Cardiac septum (tissue), 1 donor: ENCODE measurements at regions of chr17 and their contacts with region 1.

Region 1: GRCh38 chr17:40559954-40560591 is 5.2 kb downstream of the CCR7 start:
- DNase-seq: peak; percentile 93

Region 2: DNA sequence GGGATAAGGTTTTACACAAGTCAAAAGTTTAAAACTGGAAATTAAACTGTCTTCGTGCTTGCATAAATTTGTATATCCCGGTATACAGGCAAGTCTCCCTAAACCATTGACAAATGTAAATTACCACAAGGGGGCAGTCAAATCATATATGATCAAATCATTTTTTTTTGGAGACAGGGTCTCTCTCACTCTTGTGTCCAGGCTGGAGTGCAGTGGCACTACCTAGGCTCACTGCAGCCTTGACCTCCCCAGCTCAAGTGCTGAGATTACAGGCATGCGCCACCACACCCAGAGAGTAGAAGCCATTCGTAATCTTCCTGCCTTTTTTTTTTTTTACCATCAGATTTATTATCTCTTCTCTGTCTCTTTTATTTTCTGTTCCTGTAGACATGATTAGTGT is 160.9 kb before region 1 on chr17:
- intact Hi-C with region 1: loop called (anchors 5 kb)
- DNase-seq: no peak

Region 3: GRCh38 chr17:40443583-40444327 is 116.3 kb before region 1 on chr17:
- intact Hi-C with region 1: loop called (anchors 2 kb)
- DNase-seq: peak; percentile 85

Region 4: DNA sequence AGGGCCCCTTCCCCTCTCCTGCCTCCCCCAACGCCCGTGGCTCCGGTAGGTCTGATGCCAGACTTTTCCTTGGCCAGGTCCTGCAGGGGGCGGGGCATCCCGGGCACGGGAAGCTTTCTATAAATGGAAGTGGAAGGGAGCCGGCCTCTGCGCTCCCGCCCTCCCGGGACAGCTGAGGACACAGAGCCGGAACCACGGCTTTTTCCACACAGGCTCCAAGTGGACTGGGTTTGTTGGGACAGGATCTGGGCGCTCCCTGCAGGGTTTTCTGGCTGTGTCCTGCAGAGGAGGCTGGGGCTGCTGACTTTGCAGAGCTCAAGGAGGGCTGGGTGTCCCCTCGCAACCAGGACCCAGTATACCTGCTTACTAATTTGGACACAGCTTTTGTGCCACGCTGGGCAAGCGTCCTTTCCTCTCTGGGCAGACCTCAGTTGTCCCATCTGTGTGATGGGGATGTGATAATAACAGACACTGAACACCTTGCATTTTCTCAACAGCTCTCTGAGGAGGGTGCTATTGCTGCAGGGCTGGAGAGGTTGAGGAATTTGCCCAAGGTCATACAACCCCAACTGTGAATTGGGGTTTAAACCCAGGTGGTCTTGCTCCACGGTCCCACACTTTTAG is 60.4 kb before region 1 on chr17:
- intact Hi-C with region 1: no loop called
- DNase-seq: peak; percentile 92